AG04449 (cell line): ENCODE measurements at regions of chr3 and their contacts with region 1.

Region 1: DNA sequence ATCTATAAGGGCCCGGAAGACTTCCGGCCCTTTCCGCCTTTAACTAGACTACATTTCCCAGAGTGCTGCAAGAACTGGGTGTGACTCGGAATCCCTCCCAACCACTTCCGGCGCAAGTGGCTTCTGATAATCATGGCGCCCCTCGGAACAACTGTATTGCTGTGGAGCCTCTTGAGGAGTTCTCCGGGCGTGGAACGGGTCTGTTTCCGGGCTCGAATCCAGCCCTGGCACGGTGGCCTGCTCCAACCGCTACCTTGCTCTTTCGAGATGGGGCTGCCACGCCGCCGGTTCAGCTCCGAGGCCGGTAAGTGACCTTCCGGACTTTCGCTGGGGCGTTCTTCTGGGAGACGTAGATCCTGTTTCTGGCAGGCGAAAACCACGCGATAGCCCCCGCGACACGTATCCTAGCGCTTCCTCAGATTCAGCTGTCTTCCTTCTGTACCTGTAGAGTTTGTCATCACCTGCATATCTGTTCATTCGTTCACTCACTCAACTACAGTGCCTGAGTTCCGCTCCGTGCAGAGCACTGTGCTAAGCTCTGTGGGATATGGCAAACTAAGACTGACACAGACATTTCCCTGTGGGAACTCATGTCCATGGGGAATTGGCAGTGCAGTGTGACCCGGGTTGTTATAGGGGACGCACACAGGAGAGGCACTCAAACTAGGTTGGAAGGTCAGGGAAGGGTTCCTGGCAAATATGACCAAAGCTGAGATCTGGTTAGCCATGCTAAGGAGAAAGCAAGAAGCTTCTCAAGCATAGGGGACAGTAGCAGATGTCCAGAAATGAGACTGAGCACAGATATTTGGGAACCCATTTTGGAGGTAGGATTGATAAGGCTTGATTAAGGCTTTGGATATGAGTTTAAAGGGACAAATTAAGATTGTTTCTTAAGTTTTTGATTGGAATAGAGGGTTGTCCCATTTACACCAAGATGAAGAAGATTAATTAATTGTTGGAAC is at the start of gene MRPS22:
- DNase-seq: peak; percentile 66
- H3K4me3 ChIP-seq: peak within 1 kb of the TSS; percentile 90
- CTCF ChIP-seq: no peak

Region 2: GRCh38 chr3:139329345-139329850 is 14.8 kb before region 1 on chr3:
- CTCF ChIA-PET with region 1: interaction called, 34 read pairs
- POLR2A ChIA-PET with region 1: no interaction called
- DNase-seq: no peak
- H3K4me3 ChIP-seq: peak overlapping the region; percentile 36
- CTCF ChIP-seq: peak; percentile 100

Region 3: GRCh38 chr3:139374099-139374498 is 29.9 kb after region 1 on chr3:
- CTCF ChIA-PET with region 1: no interaction called
- POLR2A ChIA-PET with region 1: no interaction called
- DNase-seq: no peak
- H3K4me3 ChIP-seq: no peak overlapping the region
- CTCF ChIP-seq: no peak

Region 4: DNA sequence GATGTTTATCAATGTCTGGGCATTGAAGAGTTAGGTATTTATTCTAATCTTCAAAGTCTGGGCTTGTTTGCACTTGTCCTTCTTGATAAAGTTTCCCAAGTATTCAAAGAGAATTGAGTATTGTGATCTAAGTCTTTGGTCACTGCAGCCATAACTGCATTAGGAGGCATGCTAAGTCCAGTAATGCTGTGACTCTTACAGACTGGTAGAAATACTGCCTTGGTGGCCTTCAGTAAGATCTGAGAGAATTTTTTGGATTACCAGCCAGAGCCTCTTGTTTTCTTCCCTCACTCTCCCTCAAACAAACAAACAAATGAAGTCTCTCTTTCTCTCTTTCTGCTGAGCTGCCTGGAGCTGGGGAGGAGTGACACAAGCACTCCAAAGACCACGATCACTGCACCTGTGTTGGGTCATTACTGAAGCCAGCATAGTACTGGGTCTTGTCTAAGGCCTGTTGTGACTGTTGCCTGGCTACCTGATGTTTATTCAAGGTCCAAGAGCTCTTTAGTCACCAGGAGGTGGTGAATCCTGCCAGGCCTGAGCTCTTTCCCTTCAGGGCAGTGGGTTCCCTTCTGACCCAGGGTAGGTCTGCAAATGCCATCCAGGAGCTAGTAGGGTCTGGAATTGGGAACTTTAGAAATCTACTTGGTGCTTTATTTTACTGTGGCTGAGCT is 147.0 kb after region 1 on chr3:
- CTCF ChIA-PET with region 1: no interaction called
- POLR2A ChIA-PET with region 1: no interaction called
- DNase-seq: no peak
- H3K4me3 ChIP-seq: no peak overlapping the region
- CTCF ChIP-seq: no peak